Thyroid gland (tissue), 4 donors: ENCODE measurements at regions of chr17 and their contacts with region 1.

Region 1: GRCh38 chr17:44324571-44325275 is at the start of gene SLC25A39:
- DNase-seq: peak; percentile 95 to 96
- H3K4me3 ChIP-seq: peak within 1 kb of the TSS; percentile 57 to 96 (median 80)
- H3K27ac ChIP-seq: peak within 1 kb of the TSS; percentile 91 to 94 (median 92)
- H3K4me1 ChIP-seq: peaks cover 24 to 35% of the 10 kb centered on the region in 2 donors
- H3K27me3 ChIP-seq: no peaks in the 10 kb centered on the region
- CTCF ChIP-seq: peak in 1 of 6 experiments; percentile 29
- POLR2A ChIP-seq: peak; percentile 26 to 88
- total RNA-seq, gene SLC25A39: 82.5 to 201 (median 144) TPM

Region 2: GRCh38 chr17:44141717-44142285 is 182.9 kb before region 1 on chr17 and contains the start of gene HROB:
- intact Hi-C with region 1: loop called (anchors 5 kb)
- DNase-seq: peak; percentile 95 to 96
- H3K4me3 ChIP-seq: peak within 1 kb of the TSS in 2 of 3 donors; percentile 40 to 48
- H3K27ac ChIP-seq: no peak within 1 kb of the TSS
- H3K4me1 ChIP-seq: peaks cover 17 to 24% of the 10 kb centered on the region in 2 donors
- H3K27me3 ChIP-seq: no peaks in the 10 kb centered on the region
- CTCF ChIP-seq: peak; percentile 71 to 98 (median 91)
- POLR2A ChIP-seq: no peak
- total RNA-seq, gene HROB: 0.20 to 1.1 (median 0.30) TPM

Region 3: DNA sequence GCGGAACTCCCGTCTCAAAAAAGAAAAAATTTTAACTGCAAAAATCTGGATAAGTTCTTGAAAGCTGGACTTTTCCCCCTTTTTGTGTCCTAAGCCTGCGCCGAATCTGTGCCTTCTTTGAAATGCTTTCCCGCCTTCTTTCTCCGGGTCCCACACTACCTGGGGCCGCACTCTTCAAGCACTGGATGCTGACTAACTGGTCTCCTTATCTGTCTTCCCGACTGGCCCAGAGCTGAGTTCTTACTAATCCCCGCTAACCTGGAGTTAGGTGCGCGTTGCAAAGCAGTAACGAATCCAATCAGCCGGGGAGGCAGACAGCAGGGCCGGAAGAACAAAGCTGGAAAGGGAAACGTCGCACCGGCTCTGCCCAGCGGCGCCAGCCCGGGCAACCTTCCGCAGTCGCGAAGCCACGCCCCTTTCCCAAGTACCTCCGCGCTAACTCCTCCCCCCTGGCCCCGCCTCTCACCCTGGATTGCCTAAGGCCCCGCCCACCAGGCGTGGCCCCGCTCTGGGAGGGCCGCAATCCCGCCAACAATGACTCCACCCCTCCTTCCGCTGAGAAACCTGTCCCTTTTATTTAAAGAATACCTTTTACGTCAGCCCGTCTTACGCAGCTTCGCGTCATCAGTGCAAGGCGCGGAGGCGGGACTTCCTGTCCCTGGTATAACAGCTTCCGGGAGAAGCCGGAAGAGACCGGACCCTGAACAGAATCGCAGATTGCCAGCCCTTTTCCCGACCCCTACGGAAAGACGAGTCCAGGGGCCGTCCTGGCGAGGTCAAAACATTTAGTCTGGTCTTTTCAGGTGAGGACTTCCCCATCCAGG is 138.2 kb before region 1 on chr17 and contains the start of gene TMUB2:
- intact Hi-C with region 1: no loop called
- DNase-seq: peak; percentile 97 to 98
- H3K4me3 ChIP-seq: peak within 1 kb of the TSS; percentile 65 to 95 (median 72)
- H3K27ac ChIP-seq: peak within 1 kb of the TSS; percentile 88 to 92 (median 90)
- H3K4me1 ChIP-seq: peaks cover 7 to 27% of the 10 kb centered on the region in 2 donors
- H3K27me3 ChIP-seq: no peaks in the 10 kb centered on the region
- CTCF ChIP-seq: peak in 1 of 6 experiments; percentile 7
- POLR2A ChIP-seq: peak in 1 of 2 donors; percentile 95
- total RNA-seq, gene TMUB2: 30.6 to 50.5 (median 44.6) TPM

Region 4: GRCh38 chr17:44218344-44219107 is 106.2 kb before region 1 on chr17:
- intact Hi-C with region 1: loop called (anchors 2 kb)
- DNase-seq: peak; percentile 84 to 88
- H3K4me3 ChIP-seq: peak overlapping the region in 2 of 3 donors; percentile 75 to 88
- H3K27ac ChIP-seq: peak overlapping the region; percentile 97 to 99 (median 98)
- H3K4me1 ChIP-seq: peaks cover 21 to 28% of the 10 kb centered on the region in 2 donors
- H3K27me3 ChIP-seq: no peaks in the 10 kb centered on the region
- CTCF ChIP-seq: peak; percentile 30 to 74 (median 44)
- POLR2A ChIP-seq: peak in 1 of 2 donors; percentile 63